Head of caudate nucleus (tissue), 42 donors: ENCODE measurements at regions of chr12 and their contacts with region 1.

Region 1: DNA sequence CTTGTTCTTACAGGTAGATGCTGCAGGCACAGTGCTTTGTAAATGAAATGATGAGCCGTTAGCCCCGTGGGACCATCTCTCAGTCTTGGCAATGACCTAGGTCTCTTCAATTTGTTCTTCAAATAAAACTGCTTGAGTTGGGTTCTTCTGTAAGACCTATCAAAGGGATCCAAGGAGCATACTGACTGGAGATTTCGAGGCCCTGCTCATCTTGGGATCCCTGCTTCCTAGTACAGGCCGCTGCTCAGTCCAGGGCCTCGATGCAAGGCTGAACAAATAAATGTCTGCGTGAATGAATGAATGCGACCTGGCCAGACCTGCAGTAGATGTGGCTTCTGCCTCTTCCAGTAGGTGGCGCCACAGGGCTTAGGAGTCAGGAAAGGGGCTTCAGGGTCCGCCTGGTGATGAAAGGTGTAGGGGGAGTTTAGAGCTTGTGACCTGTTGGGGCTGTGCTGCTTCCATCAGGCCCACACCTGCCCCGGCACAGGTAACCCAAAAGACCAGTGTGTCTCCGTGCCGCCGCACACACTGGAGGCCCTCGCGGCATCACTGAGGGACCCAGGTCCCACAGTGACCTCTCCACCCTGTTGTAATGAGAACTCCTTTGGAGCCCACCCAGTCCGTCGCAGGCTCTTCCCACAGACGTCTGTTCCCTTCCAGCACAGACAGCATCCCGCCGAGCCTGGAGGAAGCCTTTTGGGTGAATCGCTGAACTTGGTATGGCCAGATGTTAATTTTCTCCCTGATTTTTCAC is 4.4 kb downstream of the CACNA1C start:
- DNase-seq: peak; percentile 33 to 85 (median 68)

Region 2: GRCh38 chr12:2034633-2035430 is 22.4 kb before region 1 on chr12:
- intact Hi-C with region 1: no loop called
- DNase-seq: peak; percentile 69 to 97 (median 92)

Region 3: GRCh38 chr12:2284857-2285256 is 227.6 kb after region 1 on chr12:
- intact Hi-C with region 1: loop called (anchors 10 kb)
- DNase-seq: peak; percentile 45 to 87 (median 70)